Caco-2 (cell line): ENCODE measurements at regions of chr13 and their contacts with region 1.

Region 1: GRCh38 chr13:45349438-45349837 is 8.5 kb upstream of the TPT1 start:
- DNase-seq: no peak
- H3K4me3 ChIP-seq: no peak overlapping the region
- H3K4me3 Mint-ChIP-seq: no peak overlapping the region
- H3K27ac Mint-ChIP-seq: peak overlapping the region; percentile 6
- H3K4me1 ChIP-seq: no peaks in the 10 kb centered on the region
- H3K4me1 Mint-ChIP-seq: no peaks in the 10 kb centered on the region
- H3K27me3 ChIP-seq: no peaks in the 10 kb centered on the region
- H3K27me3 Mint-ChIP-seq: no peaks in the 10 kb centered on the region
- CTCF ChIP-seq: no peak

Region 2: DNA sequence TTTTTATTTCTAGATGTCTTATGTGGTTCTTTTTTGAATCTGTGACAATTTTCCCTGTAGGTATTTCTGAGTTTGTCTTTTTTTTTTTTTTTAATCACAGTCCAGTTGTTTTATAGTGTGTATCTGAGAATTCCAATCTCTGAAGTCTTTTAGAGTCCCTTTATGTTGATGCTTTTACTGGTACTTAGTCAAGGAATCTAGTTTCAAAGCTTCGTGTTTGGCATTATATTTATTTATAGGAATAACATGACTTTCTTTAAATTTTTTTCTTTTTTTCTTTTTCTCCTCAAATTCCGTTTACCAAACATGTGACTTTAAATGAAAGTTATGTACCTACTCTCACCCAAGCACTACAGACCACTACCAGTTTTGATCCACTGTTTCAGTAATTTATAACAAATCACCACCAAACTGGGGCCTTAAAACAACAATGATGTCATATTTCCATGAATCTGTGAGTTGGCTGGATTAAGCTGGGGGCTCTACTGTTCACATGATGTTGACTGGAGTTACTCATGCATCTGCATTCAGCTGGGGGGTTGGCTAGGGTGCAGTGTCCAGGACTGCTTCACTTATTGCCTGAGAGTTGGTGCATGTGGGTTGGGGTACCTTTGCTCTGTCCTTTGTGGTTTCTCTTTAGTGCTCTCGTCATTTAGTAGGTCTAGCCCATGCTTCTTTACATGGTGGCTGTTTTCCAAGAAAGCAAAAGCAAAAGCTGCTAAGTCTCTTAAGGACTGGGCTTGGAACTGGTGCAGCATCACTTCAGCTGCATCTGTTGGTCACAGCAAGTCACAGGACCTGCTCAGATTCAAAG is 170.9 kb before region 1 on chr13:
- CTCF ChIA-PET with region 1: no interaction called
- POLR2A ChIA-PET with region 1: interaction called, 10 read pairs
- intact Hi-C with region 1: no loop called
- DNase-seq: no peak
- H3K4me3 ChIP-seq: no peak overlapping the region
- H3K4me3 Mint-ChIP-seq: no peak overlapping the region
- H3K27ac Mint-ChIP-seq: peak overlapping the region; percentile 20
- H3K4me1 ChIP-seq: peaks cover 19% of the 10 kb centered on the region
- H3K4me1 Mint-ChIP-seq: peaks cover 21% of the 10 kb centered on the region
- H3K27me3 ChIP-seq: no peaks in the 10 kb centered on the region
- H3K27me3 Mint-ChIP-seq: no peaks in the 10 kb centered on the region
- CTCF ChIP-seq: no peak

Region 3: DNA sequence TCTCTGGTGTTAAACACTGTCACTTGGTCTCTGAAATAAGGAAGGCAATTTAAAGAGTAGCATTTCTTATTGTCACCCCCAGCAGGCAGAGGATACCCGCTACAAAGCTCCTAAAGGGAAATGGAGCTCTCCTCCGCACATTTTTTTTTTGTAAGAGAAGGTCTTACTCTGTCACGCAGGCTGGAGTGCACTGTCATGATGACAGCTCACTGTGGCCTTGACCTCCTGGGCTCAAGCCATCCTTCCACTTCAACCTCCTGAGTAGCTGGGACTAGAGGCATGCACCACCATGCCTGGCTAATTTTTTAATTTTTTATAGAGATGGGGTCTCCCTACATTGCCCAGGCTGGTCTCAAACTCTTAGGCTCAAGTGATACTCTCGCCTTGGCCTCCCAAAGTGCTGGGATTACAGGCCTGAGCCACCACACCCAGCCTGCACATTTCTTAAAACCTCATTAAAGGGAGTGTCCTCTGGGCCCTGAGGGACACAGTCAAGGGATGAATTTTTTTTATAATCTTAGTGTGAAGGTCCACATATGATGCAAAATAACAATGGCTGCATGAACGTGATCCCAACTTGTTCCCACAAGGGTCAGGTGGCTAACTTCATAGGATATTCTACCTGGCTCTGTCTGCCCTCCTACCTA is 36.6 kb after region 1 on chr13:
- CTCF ChIA-PET with region 1: no interaction called
- POLR2A ChIA-PET with region 1: no interaction called
- intact Hi-C with region 1: no loop called
- DNase-seq: no peak
- H3K4me3 ChIP-seq: no peak overlapping the region
- H3K4me3 Mint-ChIP-seq: no peak overlapping the region
- H3K27ac Mint-ChIP-seq: no peak overlapping the region
- H3K4me1 ChIP-seq: 0 out of 2 replicates have a peak, but pooled peaks cover 3% of the 10 kb centered on the region
- H3K4me1 Mint-ChIP-seq: no peaks in the 10 kb centered on the region
- H3K27me3 ChIP-seq: no peaks in the 10 kb centered on the region
- H3K27me3 Mint-ChIP-seq: no peaks in the 10 kb centered on the region
- CTCF ChIP-seq: no peak